ENCODE measurements at regions of chr19 and their contacts with region 1.

Region 1: GRCh38 chr19:49676690-49677231 is 310 bp upstream of the PRMT1 start:
- DNase-seq: peak; percentile 100
- H3K4me3 ChIP-seq: peak overlapping the region; percentile 84 to 100 (median 91)
- H3K27ac ChIP-seq: peak overlapping the region; percentile 92
- H3K4me1 ChIP-seq: peaks cover 25% of the 10 kb centered on the region
- H3K27me3 ChIP-seq: no peaks in the 10 kb centered on the region
- CTCF ChIP-seq: no peak

Region 2: GRCh38 chr19:49497047-49497788 is 179.5 kb before region 1 on chr19:
- CTCF ChIA-PET with region 1: no interaction called
- dilution Hi-C with region 1: no loop called
- in situ Hi-C with region 1: loop called in 1 of 2 experiments (anchors 5 kb)
- intact Hi-C with region 1: loop called (anchors 2 kb)
- DNase-seq: peak; percentile 52
- H3K4me3 ChIP-seq: peak overlapping the region; percentile 81 to 99 (median 98)
- H3K27ac ChIP-seq: peak overlapping the region; percentile 95
- H3K4me1 ChIP-seq: peaks cover 12% of the 10 kb centered on the region
- H3K27me3 ChIP-seq: no peaks in the 10 kb centered on the region
- CTCF ChIP-seq: no peak

Region 3: GRCh38 chr19:49555600-49556411 is 121.0 kb before region 1 on chr19:
- CTCF ChIA-PET with region 1: no interaction called
- dilution Hi-C with region 1: no loop called
- in situ Hi-C with region 1: no loop called
- intact Hi-C with region 1: no loop called
- DNase-seq: no peak
- H3K4me3 ChIP-seq: no peak overlapping the region
- H3K27ac ChIP-seq: no peak overlapping the region
- H3K4me1 ChIP-seq: peaks cover 11% of the 10 kb centered on the region
- H3K27me3 ChIP-seq: no peaks in the 10 kb centered on the region
- CTCF ChIP-seq: no peak

Region 4: DNA sequence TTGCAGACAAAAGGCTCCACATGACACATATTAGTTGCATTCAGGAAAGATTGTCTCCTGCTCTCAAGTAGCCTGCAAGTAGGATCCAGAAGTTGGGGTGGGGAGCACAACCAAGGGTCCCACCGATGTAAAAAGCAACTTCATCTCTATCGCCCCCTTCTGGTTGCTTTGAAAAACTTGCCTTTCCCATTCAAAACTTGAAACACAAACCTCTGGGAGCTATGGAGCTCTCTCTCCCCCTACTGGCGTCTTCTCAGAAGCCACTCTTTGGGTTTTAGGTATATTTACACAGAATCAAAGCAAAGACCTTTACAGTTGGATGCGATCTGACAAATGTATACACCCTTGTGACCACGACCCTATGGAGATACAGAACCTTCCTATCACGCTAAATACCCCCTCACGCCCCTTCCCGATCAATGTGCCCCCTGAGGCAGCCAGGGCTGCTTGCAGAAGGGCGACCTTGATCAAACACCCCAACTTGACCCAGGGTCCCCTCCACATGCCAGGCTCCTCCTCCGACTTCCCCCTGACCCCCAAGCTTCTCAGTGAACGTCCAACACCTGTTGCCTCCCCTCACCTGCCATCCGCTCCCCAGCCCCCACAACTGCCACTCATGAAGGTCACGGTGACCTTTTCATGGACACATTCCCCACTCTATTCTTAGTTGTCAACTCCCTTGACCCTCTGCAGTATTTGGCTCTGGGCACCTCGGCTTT is 106.5 kb before region 1 on chr19:
- CTCF ChIA-PET with region 1: interaction called, 3 read pairs
- dilution Hi-C with region 1: no loop called
- in situ Hi-C with region 1: no loop called
- intact Hi-C with region 1: loop called (anchors 5 kb)
- DNase-seq: peak; percentile 58
- H3K4me3 ChIP-seq: no peak overlapping the region
- H3K27ac ChIP-seq: no peak overlapping the region
- H3K4me1 ChIP-seq: peaks cover 3% of the 10 kb centered on the region
- H3K27me3 ChIP-seq: no peaks in the 10 kb centered on the region
- CTCF ChIP-seq: peak; percentile 99 to 100

Region 5: DNA sequence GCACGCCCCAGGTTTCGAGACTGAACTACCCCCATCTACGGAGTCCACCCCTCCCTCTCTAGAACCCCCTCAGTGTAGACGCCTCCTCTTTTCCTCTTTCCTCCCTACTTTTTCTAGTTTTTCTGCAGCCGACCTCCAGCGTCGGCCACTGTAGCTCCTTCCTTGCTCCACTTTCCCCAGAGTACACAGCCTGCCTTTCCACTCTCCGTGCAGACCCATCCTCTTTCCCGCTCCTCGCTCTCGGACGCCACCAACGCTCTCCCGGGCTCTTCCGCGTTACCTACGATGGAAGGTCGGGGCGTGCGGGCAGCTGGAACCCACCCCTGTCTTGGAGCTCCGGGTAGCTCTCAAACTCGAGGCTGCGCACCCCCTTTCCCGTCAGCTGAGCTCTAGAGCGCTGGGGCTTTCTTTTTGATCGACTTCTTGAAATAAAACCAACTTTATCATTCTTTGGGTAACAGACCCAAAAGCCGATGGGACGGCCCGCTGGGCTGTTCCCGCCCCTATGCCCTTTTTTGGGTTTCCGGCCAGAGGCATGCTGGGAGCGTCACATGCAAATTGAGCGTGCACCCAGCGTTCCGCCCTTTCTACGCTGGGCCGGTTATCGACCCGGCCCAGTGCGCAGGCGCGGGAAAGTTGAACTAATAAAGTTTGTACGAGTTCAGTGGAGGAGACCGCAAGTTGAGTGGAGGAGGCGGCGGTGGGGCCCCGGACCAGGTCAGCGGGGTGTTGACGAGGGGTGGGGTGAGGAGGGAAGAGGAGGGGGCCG is 11.2 kb before region 1 on chr19 and contains the starts of genes BCL2L12 and IRF3:
- CTCF ChIA-PET with region 1: no interaction called
- dilution Hi-C with region 1: no loop called
- in situ Hi-C with region 1: no loop called
- intact Hi-C with region 1: loop called (anchors 1 kb)
- DNase-seq: peak; percentile 94
- H3K4me3 ChIP-seq: peak within 1 kb of the TSS; percentile 52 to 90 (median 81)
- H3K27ac ChIP-seq: peak within 1 kb of the TSS; percentile 80
- H3K4me1 ChIP-seq: peaks cover 15% of the 10 kb centered on the region
- H3K27me3 ChIP-seq: no peaks in the 10 kb centered on the region
- CTCF ChIP-seq: no peak
- total RNA-seq, gene BCL2L12: 4.3 to 43.1 TPM
- total RNA-seq, gene IRF3: 39.7 to 94.2 TPM

Region 6: DNA sequence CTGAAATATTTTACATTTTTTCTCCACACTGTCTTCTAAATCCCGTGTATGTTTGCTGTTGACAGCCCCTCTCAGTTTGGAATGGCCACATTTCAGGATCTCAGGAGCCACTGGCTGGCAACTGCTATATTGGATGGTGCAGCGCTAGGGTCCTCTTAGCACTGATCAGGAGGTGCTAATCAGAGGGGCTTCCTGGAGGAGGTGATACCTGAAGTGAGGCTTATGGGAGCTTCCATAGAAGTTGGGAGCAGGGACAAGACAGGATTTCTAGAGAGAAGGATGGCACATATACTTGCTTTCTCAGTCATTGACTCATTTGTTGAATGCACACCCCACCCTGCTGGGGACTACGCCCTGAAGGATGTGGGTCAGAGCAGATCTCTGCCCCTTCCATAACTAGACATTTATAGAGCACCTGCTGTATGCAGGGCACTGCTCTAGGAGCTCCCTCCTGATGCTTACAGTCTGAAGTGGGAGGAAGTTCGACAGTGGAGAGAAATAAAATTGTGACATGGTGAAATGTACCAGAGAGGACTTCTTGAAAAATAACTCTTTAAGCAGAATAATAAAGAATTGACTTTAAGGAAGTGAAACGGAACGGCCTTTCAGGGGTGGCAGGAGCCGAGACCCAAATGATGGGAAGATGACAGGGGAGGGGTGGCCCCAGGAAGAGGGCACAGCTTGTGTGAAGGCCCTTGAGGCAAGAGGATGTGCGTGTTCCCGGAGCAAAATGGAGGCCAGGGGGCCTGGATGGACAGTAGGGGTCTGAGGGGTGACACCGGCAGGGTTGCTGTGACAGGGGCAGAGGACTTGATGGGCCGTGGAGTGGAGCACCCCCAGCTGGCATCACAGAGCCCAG is 103.2 kb after region 1 on chr19:
- CTCF ChIA-PET with region 1: interaction called, 3 read pairs
- dilution Hi-C with region 1: loop called (anchors 5 kb)
- in situ Hi-C with region 1: no loop called
- intact Hi-C with region 1: no loop called
- DNase-seq: no peak
- H3K4me3 ChIP-seq: no peak overlapping the region
- H3K27ac ChIP-seq: no peak overlapping the region
- H3K4me1 ChIP-seq: no peaks in the 10 kb centered on the region
- H3K27me3 ChIP-seq: no peaks in the 10 kb centered on the region
- CTCF ChIP-seq: no peak

Region 7: DNA sequence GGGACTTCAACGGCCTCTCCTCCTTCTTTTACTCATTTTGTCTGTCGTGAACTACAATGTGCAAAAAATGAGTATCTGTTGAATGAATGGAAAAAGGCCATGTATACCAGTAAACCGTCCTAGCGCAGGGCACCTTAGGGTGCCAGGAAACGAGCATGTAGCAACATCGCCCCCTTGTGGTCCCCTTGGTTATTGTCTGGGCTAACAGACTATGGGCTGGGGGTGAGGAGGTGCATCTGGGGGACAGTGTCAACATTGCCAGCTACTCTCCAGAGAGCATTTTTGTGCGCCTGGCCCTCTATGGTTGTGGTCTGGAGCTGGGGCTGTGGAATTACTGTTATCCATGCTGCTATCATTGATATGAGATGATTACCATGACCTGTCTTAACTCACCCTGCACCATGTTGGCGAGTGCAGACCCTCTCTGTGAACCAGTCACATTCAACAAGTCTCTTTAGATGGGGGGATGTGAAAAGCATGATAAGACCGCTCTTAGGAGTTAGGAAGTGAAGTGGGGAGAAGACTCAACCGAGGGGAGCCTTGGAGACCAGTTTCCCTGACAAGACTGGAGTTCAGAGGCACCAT is 307.0 kb after region 1 on chr19:
- CTCF ChIA-PET with region 1: no interaction called
- dilution Hi-C with region 1: no loop called
- in situ Hi-C with region 1: no loop called
- intact Hi-C with region 1: loop called (anchors 10 kb)
- DNase-seq: peak; percentile 20
- H3K4me3 ChIP-seq: no peak overlapping the region
- H3K27ac ChIP-seq: no peak overlapping the region
- H3K4me1 ChIP-seq: no peaks in the 10 kb centered on the region
- H3K27me3 ChIP-seq: no peaks in the 10 kb centered on the region
- CTCF ChIP-seq: peak; percentile 80 to 81